BJ (cell line): ENCODE measurements at regions of chr6 and their contacts with region 1.

Region 1: DNA sequence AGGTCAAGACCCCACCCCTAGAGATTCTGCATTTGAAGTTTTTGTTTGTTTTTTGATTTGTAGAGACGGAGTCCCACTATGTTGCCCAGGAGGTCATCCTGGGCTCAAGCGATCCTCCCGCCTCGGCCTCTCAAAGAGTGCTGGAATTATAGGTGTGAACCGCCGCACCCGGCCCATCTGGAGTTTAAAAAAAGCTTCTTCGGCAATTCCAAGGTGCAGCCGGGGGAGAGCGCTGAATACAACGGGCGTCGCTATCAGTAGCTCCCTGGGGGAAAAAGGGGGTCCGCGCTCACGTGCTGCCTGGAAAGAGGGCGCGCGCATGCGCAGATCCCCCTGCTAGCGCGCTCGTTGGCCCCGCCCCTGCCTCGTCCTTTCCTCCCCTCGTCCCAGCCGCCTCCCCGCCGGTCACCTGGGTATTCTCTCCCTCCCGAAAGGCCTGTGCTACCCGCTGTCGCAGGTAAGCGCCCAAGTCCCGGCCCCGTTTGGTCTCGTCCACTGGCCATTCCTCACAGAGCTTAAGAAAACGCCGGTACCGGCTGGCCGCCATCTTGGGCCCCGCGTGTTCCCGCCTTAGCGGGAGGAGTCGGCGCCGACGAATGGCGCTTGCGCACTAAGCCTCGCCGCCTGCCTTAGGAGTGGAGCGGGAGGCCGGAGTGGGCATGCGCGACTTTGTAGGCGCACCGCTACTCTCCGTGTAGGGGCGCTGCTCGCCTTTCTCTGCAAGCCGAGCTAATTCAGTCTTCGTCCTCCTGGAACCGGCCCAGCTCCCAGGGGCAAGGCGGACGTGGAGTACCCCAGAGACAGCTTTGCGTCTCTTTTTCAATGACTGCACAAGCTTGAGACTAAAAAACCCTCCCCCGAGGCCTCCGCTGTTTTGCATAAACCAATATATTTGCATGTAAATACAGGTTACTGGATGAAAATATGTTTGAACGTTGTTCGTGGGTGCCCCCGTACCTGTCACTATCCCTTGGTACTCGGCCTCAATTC is at the start of gene UQCC2:
- DNase-seq: peak; percentile 76
- H3K4me3 ChIP-seq: peak within 1 kb of the TSS; percentile 95
- H3K27me3 ChIP-seq: no peaks in the 10 kb centered on the region
- CTCF ChIP-seq: peak; percentile 81
- polyA plus RNA-seq, gene UQCC2: 51.7 and 66.5 TPM in 2 replicates

Region 2: DNA sequence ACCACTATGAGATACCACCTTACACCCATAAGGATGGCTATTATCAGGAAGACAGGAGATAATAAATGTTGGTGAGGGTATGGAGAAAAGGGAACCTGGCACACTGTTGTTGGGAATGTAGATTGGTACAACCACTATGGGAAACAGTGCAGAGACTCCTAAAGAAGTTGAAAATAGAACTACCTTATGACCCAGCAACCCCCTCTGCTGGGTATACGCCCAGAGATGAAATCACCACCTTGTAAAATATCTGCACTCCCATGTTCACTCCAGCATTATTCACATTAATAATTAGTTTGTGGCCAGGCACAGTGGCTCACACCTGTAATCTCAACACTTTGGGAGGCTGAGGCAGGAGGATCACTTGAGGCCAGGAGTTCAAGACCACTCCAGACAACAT is 230.2 kb before region 1 on chr6:
- CTCF ChIA-PET with region 1: no interaction called
- POLR2A ChIA-PET with region 1: no interaction called
- DNase-seq: no peak
- H3K4me3 ChIP-seq: no peak overlapping the region
- H3K27me3 ChIP-seq: peaks cover 7% of the 10 kb centered on the region
- CTCF ChIP-seq: no peak

Region 3: DNA sequence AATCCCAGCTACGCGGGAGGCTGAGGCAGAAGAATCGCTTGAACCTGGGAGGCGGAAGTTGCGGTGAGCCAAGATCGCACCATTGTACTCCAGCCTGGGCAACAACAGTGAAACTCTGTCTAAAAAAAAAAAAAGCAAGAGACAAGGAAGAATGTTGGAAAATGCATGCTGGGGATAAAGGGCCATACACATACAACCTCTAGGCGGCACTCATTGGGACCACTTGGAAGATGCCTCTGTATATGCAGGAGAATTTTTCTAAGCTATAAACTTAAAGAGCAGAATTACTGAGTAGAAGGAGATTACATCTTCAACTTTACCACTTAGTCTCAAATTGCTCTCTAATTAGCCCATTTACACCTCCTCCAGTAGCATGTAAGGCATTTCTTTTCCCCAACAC is 214.3 kb before region 1 on chr6:
- CTCF ChIA-PET with region 1: no interaction called
- POLR2A ChIA-PET with region 1: no interaction called
- DNase-seq: no peak
- H3K4me3 ChIP-seq: no peak overlapping the region
- H3K27me3 ChIP-seq: peaks cover 5% of the 10 kb centered on the region; the same call in 1 of the 2 replicates
- CTCF ChIP-seq: no peak

Region 4: DNA sequence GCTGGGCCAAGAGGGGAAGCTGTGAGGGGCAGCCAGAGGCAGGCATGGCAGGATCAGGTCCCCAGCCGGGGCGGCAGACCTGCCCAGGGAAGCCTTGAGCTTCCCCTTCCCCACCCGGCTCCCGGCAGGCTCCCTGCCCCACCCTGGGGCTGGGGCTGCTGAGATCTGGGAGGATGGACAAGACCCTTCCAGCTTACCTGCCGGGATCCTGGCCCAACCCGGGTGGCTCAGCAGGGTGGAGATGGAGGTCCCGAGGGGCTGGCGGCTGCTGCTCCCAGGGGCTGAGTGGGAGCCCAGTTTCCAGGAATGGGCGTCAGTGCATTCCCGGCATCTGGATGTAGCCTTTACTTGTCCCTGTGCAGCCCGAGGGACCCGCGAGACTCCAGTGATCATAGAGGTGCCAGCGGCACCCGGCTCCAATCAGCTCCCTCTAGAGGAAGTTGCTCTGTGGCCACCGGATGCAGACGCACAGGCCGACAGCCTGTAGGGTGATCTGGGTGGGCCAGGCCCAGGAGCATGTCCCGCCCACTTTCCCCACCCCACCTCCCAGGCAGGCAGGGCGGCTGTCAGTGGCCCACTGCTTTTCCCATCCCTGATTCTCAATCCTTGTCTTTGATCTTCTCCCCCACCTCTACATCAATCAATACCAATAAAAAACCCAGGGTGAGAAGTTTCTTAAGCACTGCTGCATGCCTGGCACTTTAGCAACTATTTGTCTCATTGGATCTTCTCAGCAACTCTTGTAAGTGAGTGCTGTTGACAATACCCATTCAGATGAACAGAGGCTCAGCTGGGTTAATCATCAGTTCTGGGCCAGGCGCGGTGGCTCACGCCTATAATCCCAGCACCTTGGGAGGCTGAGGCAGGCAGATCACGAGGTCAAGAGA is 131.4 kb before region 1 on chr6 and contains the start of gene BAK1:
- CTCF ChIA-PET with region 1: interaction called, 335 read pairs
- POLR2A ChIA-PET with region 1: no interaction called
- DNase-seq: peak; percentile 43
- H3K4me3 ChIP-seq: peak within 1 kb of the TSS; percentile 86
- H3K27me3 ChIP-seq: no peaks in the 10 kb centered on the region
- CTCF ChIP-seq: peak; percentile 69
- polyA plus RNA-seq, gene BAK1: 16.6 and 24.5 TPM in 2 replicates

Region 5: GRCh38 chr6:33744001-33744848 is 32.8 kb after region 1 on chr6:
- CTCF ChIA-PET with region 1: interaction called, 78 read pairs
- POLR2A ChIA-PET with region 1: no interaction called
- DNase-seq: no peak
- H3K4me3 ChIP-seq: no peak overlapping the region
- H3K27me3 ChIP-seq: no peaks in the 10 kb centered on the region
- CTCF ChIP-seq: peak; percentile 93

Region 6: DNA sequence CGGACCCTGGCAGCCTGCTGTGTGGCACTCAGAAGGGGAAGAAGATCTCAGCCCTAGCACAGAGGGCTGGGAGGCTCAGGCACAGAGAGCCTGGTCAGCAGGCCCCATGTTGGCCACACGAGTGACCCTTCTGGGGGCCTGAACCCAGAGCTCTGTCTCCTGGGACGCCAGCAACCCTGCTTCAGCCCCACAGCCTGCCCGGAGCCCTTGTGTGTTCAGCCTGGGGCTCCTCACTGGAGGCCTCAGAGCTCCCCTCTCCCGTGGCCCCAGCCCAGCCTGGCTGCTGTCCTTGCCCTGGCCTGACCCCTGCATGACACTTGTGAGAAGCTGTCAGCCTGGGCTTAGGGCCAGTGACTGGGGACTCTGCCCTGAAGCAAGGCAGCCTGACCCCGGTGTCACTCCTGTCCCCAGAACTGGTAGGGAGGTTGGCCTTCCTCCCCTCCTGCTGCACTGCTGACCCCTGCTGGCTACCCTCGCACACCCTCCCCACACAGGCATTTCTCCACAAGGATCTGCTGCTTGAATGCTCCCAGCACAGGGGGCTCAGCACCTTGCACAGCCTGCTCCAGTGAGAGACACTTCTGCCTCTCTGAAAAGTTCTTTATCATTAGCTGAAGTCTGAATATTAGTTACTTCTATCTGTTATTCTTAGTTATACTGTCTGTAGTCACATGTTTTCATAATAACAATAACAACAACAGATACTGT is 50.6 kb after region 1 on chr6:
- CTCF ChIA-PET with region 1: interaction called, 31 read pairs
- POLR2A ChIA-PET with region 1: no interaction called
- DNase-seq: no peak
- H3K4me3 ChIP-seq: no peak overlapping the region
- H3K27me3 ChIP-seq: no peaks in the 10 kb centered on the region
- CTCF ChIP-seq: peak; percentile 85

Region 7: GRCh38 chr6:34027445-34027936 is 316.1 kb after region 1 on chr6:
- CTCF ChIA-PET with region 1: interaction called, 16 read pairs
- POLR2A ChIA-PET with region 1: no interaction called
- DNase-seq: no peak
- H3K4me3 ChIP-seq: no peak overlapping the region
- H3K27me3 ChIP-seq: peaks cover 2% of the 10 kb centered on the region; the same call in 1 of the 2 replicates
- CTCF ChIP-seq: peak; percentile 94